ENCODE measurements at regions of chr2 and their contacts with region 1.

Region 1: DNA sequence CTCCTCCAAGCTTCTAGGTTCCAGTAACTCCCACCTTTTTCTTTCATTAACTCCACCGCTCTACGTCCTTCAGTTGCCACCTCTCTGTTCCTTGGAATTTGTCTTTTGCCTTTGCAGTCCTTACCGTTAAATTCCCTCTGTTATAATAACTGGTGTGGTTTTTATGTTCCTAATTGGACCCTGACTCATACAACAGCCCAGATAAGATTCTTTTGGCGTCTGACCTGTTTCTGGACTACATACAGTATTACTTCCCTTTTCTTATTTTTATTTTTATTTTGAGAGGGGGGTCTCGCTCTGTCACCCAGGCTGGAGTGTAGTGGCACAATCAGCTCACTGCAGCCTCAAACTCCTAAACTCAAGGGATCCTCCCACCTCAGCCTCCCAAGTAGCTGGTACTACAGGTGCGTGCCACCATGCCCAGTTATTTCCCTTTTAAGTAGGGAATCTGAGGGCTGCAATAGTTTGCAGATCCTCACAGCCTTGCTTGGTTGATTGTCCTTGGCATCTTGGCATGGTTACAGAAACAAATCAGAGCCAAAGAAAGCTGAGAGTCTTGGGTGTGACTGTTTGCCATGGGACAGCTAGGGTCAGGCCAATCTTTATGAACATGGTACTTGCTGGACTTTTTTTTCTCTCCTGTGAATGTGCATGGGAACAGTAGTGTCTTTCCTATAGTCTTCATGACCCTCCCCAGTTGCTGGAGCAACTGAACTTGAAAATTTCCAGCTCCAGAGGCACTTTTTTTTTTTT is 22.0 kb downstream of the TCF23 start:
- DNase-seq: no peak
- H3K4me3 ChIP-seq: no peak overlapping the region
- H3K27ac ChIP-seq: no peak overlapping the region
- H3K4me1 ChIP-seq: peaks cover 0 to 4% of the 10 kb centered on the region in 2 donors
- H3K27me3 ChIP-seq: no peaks in the 10 kb centered on the region
- CTCF ChIP-seq: no peak

Region 2: DNA sequence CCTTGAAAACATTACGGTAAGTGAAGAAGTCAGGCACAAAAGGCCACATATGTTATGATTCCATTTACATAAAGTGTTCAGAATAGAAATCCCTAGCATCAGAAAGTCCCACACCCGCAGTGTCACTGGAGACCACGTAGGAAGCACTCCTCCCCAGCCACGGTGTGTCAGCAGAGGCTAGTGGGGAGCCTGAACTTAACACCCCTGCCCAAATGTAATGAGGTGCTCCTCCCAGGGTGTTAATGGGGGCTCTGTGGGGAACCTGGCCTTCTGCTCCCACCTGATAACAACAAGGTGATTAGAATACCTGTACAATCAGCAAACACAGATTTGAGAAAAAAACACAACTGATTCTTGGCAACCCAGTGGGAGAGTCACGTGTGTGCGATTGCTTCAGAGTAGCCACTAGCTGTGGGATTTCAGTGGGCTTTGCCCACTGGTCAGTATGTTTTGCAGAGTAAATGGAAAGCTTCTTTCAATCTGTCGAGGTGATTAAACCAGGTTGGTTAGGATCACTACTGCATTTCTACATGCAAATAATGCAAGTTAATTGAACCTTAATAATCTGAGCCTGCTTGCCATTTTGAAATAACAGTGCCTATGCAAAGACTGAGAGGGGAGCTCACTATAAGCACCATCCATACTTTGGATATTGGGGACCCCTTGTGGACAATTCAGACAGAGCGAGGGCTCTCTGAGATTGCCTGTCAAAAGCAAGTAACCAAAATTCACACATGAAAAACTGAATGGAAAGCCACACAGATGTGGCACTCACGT is 20.5 kb after region 1 on chr2:
- intact Hi-C with region 1: loop called (anchors 1 kb)
- DNase-seq: no peak
- H3K4me3 ChIP-seq: no peak overlapping the region
- H3K27ac ChIP-seq: no peak overlapping the region
- H3K4me1 ChIP-seq: peaks cover 0 to under 1% of the 10 kb centered on the region in 2 donors
- H3K27me3 ChIP-seq: no peaks in the 10 kb centered on the region
- CTCF ChIP-seq: peak; percentile 42 to 60 (median 56)

Region 3: DNA sequence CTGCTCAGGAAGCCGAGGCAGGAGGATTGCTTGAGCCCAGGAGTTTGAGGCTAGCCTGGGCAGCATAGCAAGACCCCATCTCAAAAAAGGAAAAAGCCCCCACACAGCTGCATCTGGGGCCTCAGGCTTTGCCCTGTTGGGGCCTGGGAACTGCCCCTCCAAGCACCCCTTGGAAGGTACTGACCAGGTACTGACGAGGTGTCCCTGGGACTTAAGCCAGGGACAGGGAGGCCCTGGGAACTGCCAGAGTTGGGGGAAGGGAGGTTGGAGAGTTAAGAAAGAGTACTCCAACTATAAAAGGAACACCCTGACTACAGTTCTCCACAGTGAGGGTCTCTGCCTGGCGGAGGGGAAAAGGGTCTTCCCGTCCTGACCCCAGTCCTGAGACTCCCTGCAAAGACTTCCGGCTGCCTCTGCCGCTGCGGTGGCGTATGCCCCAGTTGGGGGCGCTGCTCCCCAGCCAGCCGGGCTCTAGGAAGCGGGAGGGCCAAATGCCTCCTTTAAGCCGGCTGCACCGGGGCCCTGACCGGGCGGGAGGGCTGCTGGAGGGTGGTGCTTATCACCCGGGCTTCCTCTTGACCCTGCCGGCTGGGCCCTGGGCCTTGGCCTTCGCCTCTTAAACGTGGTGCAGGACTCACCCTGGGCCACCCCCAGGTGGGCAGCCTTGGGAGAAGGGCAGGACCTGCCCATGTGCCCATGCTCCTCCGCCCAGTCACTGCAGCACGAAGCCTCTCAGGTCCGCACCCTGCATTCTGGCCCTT is 79.3 kb after region 1 on chr2:
- intact Hi-C with region 1: no loop called
- DNase-seq: peak in 1 of 2 donors; percentile 73
- H3K4me3 ChIP-seq: no peak overlapping the region
- H3K27ac ChIP-seq: peak overlapping the region in 1 of 2 donors; percentile 18
- H3K4me1 ChIP-seq: peaks cover 0 to 10% of the 10 kb centered on the region in 2 donors
- H3K27me3 ChIP-seq: no peaks in the 10 kb centered on the region
- CTCF ChIP-seq: peak; percentile 38 to 55 (median 46)

Measured in ascending aorta (tissue), 2 donors.